ENCODE measurements at regions of chr13 and their contacts with region 1.

Region 1: GRCh38 chr13:29850224-29850898 is at the start of gene UBL3:
- DNase-seq: peak; percentile 98
- ATAC-seq: peak; percentile 91
- H3K4me3 Mint-ChIP-seq: peak within 1 kb of the TSS; percentile 89
- H3K27ac Mint-ChIP-seq: peak within 1 kb of the TSS; percentile 99
- H3K4me1 Mint-ChIP-seq: peaks cover 34% of the 10 kb centered on the region
- H3K27me3 Mint-ChIP-seq: no peaks in the 10 kb centered on the region
- total RNA-seq, gene UBL3: 9.6 to 10.2 TPM

Region 2: DNA sequence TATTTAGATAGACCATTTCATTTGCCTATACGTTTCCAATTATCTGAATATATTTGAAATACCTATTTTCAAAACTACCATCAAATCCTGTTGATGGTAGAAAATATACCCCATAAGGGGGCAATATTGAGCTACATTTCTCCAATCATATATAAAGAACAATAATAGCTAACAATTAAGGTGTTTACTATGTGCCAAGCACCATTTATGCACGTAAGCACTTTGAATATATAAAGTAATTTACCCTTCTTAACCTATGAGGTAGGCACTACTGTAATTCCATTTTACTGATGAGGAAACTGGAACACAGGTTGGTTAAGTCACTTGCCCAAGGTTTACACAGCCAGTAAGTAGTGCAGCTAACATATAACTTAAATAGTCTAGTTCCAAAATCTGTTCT is 79.1 kb before region 1 on chr13:
- CTCF ChIA-PET with region 1: interaction called, 13 read pairs
- DNase-seq: no peak
- ATAC-seq: peak; percentile 42
- H3K4me3 Mint-ChIP-seq: no peak overlapping the region
- H3K27ac Mint-ChIP-seq: no peak overlapping the region
- H3K4me1 Mint-ChIP-seq: no peaks in the 10 kb centered on the region
- H3K27me3 Mint-ChIP-seq: no peaks in the 10 kb centered on the region

Region 3: GRCh38 chr13:29861694-29862110 is 11.3 kb after region 1 on chr13:
- CTCF ChIA-PET with region 1: no interaction called
- DNase-seq: no peak
- ATAC-seq: no peak
- H3K4me3 Mint-ChIP-seq: no peak overlapping the region
- H3K27ac Mint-ChIP-seq: no peak overlapping the region
- H3K4me1 Mint-ChIP-seq: peaks cover 4% of the 10 kb centered on the region
- H3K27me3 Mint-ChIP-seq: no peaks in the 10 kb centered on the region